HCT116 (cell line): ENCODE measurements at regions of chr11 and their contacts with region 1.

Region 1: GRCh38 chr11:102614485-102614884 is 10.6 kb downstream of the MMP20 start:
- DNase-seq: no peak
- ATAC-seq: peak; percentile 44
- H3K4me3 ChIP-seq: no peak overlapping the region
- H3K27ac ChIP-seq: no peak overlapping the region
- H3K4me1 ChIP-seq: peaks cover 18 to 62% of the 10 kb centered on the region in 2 experiments
- H3K27me3 ChIP-seq: no peaks in the 10 kb centered on the region
- CTCF ChIP-seq: peak; percentile 36 to 47 (median 46); a peak in 3 of 6 replicates
- POLR2A ChIP-seq: no peak
- RAD21 ChIP-seq: peak; percentile 63

Region 2: GRCh38 chr11:101456812-101457211 is 1157.7 kb before region 1 on chr11:
- CTCF ChIA-PET with region 1: interaction called, 3 read pairs
- POLR2A ChIA-PET with region 1: no interaction called
- RAD21 ChIA-PET with region 1: no interaction called
- intact Hi-C with region 1: loop called (anchors 5 kb)
- DNase-seq: no peak
- ATAC-seq: peak; percentile 53; the same call in 1 of the 2 replicates
- H3K4me3 ChIP-seq: no peak overlapping the region
- H3K27ac ChIP-seq: no peak overlapping the region
- H3K4me1 ChIP-seq: no peaks in the 10 kb centered on the region
- H3K27me3 ChIP-seq: no peaks in the 10 kb centered on the region
- CTCF ChIP-seq: peak; percentile 21 to 56 (median 48); a peak in 4 of 6 replicates
- POLR2A ChIP-seq: no peak
- RAD21 ChIP-seq: peak; percentile 66

Region 3: DNA sequence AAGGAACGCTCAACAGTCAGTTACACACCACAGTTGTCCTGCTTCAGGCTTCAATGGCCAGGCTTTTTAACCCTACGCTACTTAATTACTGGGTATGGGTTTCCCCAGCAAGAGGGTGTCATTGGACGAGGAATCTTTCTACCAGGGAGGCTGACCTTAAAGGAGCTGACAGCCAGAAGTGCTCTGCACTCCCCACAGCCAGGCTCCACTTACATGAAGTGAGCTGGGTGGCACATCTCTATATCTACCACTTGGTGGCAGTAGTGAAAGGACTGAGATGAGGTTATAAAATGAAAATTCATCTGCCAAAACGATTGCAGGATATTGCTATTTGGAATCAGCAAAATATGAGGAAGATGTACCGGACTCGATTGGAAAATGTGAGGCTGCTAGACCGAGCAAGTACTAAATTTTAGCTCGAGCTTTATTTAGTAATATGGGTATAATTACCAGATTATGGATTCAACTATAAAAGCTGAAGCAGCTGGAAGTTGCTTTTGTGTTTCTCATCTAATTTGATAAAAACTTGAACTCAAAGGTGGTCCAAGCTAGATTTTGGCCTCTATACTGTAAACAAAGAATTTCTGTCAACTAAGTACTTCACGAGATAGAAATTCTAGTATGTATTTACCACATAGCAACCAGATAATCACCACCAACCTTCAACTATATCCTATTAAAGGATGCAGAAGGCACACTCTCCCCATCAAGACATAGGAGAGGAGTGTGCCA is 753.6 kb before region 1 on chr11:
- CTCF ChIA-PET with region 1: interaction called, 33 read pairs
- POLR2A ChIA-PET with region 1: no interaction called
- RAD21 ChIA-PET with region 1: no interaction called
- intact Hi-C with region 1: loop called (anchors 2 kb)
- DNase-seq: peak; percentile 57
- ATAC-seq: peak; percentile 96
- H3K4me3 ChIP-seq: no peak overlapping the region
- H3K27ac ChIP-seq: no peak overlapping the region
- H3K4me1 ChIP-seq: peaks cover 0 to 38% of the 10 kb centered on the region in 2 experiments; a peak in 2 of 4 replicates
- H3K27me3 ChIP-seq: no peaks in the 10 kb centered on the region
- CTCF ChIP-seq: peak; percentile 78 to 81 (median 81)
- POLR2A ChIP-seq: no peak
- RAD21 ChIP-seq: peak; percentile 80

Region 4: DNA sequence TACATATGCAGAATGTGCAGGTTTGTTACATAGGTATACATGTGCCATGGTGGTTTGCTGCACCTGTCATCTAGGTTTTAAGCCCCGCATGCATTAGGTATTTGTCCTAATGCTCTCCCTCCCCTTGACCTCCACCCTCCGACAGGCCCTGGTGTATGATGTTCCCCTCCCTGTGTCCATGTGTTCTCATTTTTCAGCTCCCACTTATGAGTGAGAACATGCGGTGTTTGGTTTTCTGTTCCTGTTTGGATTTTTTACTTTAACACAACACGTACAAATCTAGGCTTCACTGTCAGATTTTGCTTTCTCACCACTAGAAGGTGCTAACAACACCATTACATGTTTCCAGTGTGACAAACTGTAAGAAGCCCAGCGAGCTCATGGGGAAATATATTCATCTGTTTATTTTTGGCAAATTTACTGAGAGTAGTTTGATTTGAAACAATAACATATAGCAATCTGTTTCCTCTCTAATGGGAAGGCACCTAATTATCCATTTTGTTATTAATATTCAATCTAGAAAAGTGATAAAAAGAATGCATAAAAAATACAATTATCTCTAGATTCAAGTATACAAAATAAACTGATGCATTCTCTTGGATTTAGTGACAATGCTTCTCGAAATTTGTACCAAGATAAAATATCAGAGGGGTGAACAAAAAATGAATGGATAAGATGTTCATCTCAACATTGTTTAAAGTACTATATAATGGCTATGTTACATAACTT is 320.4 kb before region 1 on chr11:
- CTCF ChIA-PET with region 1: interaction called, 27 read pairs
- POLR2A ChIA-PET with region 1: interaction called, 3 read pairs
- RAD21 ChIA-PET with region 1: no interaction called
- intact Hi-C with region 1: loop called (anchors 2 kb)
- DNase-seq: peak; percentile 62
- ATAC-seq: peak; percentile 95
- H3K4me3 ChIP-seq: no peak overlapping the region
- H3K27ac ChIP-seq: no peak overlapping the region
- H3K4me1 ChIP-seq: peaks cover 0 to 3% of the 10 kb centered on the region in 2 experiments; a peak in 1 of 4 replicates
- H3K27me3 ChIP-seq: no peaks in the 10 kb centered on the region
- CTCF ChIP-seq: peak; percentile 76 to 79 (median 78)
- POLR2A ChIP-seq: no peak
- RAD21 ChIP-seq: peak; percentile 70

Region 5: DNA sequence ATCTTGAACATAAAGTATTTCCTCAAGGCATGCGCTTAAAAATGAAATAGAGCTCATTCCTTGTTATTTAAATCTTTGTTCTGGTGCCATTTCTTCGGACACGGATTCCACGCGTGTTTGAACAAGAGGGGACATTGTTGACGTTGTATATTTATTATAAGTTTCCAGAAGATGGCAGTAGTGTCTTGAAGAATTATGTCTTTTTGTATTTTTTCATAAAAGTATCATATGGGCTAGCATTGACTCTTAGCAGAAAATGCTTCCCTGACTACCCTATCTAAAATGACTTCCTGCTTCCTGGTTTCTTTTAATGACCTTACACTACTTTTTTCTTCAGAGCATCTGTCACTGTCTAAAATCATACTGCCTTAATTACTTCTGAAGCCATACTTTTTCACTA is 247.1 kb before region 1 on chr11:
- CTCF ChIA-PET with region 1: interaction called, 20 read pairs
- POLR2A ChIA-PET with region 1: no interaction called
- RAD21 ChIA-PET with region 1: no interaction called
- intact Hi-C with region 1: loop called (anchors 5 kb)
- DNase-seq: no peak
- ATAC-seq: peak; percentile 59; the same call in 1 of the 2 replicates
- H3K4me3 ChIP-seq: no peak overlapping the region
- H3K27ac ChIP-seq: no peak overlapping the region
- H3K4me1 ChIP-seq: no peaks in the 10 kb centered on the region
- H3K27me3 ChIP-seq: no peaks in the 10 kb centered on the region
- CTCF ChIP-seq: peak in 2 of 3 experiments; percentile 31 to 44; a peak in 3 of 6 replicates
- POLR2A ChIP-seq: no peak
- RAD21 ChIP-seq: peak; percentile 48; the same call in 1 of the 2 replicates

Region 6: DNA sequence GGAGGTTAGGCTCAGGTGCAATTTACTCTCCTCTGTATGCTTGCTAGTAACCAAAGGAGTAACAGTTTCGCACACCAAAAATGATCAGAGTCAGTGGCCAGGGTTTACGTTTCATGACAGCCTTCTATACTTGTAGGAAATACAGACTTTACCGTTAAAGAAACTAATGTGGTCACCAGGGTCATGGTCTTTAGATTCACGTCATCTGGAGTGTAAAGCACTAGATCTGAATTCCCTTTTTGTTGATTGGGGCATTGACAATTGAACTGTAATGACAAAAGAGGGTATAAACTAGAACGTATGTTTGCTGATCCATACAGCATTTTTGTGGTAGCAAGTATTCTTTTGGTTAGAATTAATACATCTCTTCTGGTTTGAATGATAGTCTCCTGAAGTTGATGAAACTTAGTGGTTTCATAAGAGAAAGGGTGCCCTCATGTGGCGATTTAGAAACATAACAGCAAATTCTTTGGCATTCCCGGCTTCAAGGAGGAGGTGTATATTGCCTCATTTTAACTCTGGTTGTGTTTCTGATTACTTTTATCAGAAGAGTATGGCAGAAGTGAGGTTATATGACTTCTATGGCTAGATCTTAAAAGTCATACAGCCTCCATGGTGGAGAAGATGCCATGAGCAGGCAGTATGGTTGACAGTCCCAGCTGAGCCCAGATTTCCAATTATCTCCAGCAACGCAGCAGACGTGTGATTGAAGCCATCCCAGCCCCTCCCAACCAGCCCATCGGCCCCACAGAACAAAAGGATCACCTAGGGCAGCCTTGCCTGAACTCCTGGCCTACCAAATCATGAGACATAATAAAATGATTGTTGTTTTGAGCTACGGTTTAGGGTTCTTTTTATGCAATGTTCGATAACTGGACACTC is 119.1 kb before region 1 on chr11:
- CTCF ChIA-PET with region 1: interaction called, 13 read pairs
- POLR2A ChIA-PET with region 1: no interaction called
- RAD21 ChIA-PET with region 1: interaction called in 1 of 2 experiments, 3 read pairs
- intact Hi-C with region 1: loop called (anchors 2 kb)
- DNase-seq: peak; percentile 81
- ATAC-seq: peak; percentile 81
- H3K4me3 ChIP-seq: peak overlapping the region; percentile 20 to 38
- H3K27ac ChIP-seq: no peak overlapping the region
- H3K4me1 ChIP-seq: peaks cover 13 to 35% of the 10 kb centered on the region in 2 experiments
- H3K27me3 ChIP-seq: no peaks in the 10 kb centered on the region
- CTCF ChIP-seq: peak; percentile 52 to 88 (median 79)
- POLR2A ChIP-seq: no peak
- RAD21 ChIP-seq: peak; percentile 95

Region 7: GRCh38 chr11:102666331-102666957 is 52.0 kb after region 1 on chr11:
- CTCF ChIA-PET with region 1: interaction called, 30 read pairs
- POLR2A ChIA-PET with region 1: no interaction called
- RAD21 ChIA-PET with region 1: no interaction called
- intact Hi-C with region 1: no loop called
- DNase-seq: peak; percentile 37
- ATAC-seq: peak; percentile 74
- H3K4me3 ChIP-seq: no peak overlapping the region; a peak in 1 of 4 replicates
- H3K27ac ChIP-seq: no peak overlapping the region
- H3K4me1 ChIP-seq: peaks cover 0 to 12% of the 10 kb centered on the region in 2 experiments; a peak in 1 of 4 replicates
- H3K27me3 ChIP-seq: no peaks in the 10 kb centered on the region
- CTCF ChIP-seq: peak; percentile 82 to 92 (median 91)
- POLR2A ChIP-seq: no peak
- RAD21 ChIP-seq: peak; percentile 92

Region 8: DNA sequence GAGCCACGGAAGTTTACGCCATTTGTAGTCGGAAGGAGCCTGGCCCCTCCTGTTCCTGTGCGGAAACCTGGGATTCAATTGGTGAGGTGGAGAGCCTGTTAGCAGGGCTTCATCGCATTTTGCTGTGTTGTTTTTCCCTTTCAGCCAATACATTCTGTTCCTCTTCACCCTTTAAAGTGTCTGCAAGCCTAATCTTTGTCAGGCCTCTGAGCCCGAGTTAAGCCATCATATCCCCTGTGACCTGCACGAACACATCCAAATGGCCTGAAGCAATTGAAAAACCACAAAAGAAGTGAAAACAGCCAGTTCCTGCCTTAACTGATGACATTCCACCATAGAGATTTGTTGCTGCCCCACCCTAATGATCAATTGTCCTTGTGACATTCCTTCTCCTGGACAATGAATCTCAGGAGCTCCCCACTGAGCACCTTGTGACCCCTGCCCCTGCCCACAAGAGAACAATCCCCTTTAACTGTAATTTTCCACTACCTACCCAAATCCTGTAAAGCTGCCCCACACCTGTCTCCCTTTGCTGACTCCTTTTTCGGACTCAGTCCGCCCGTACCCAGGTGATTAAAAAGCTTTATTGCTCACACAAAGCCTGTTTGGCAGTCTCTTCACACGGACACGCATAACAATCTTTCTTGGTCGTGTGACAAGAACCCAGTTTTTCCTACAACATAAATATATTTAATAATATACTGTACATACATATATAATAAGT is 297.4 kb after region 1 on chr11:
- CTCF ChIA-PET with region 1: no interaction called
- POLR2A ChIA-PET with region 1: no interaction called
- RAD21 ChIA-PET with region 1: no interaction called
- intact Hi-C with region 1: no loop called
- DNase-seq: no peak
- ATAC-seq: no peak
- H3K4me3 ChIP-seq: no peak overlapping the region
- H3K27ac ChIP-seq: no peak overlapping the region
- H3K4me1 ChIP-seq: no peaks in the 10 kb centered on the region
- H3K27me3 ChIP-seq: no peaks in the 10 kb centered on the region
- CTCF ChIP-seq: no peak
- POLR2A ChIP-seq: no peak
- RAD21 ChIP-seq: no peak